ENCODE measurements at regions of chr1 and their contacts with region 1.

Region 1: DNA sequence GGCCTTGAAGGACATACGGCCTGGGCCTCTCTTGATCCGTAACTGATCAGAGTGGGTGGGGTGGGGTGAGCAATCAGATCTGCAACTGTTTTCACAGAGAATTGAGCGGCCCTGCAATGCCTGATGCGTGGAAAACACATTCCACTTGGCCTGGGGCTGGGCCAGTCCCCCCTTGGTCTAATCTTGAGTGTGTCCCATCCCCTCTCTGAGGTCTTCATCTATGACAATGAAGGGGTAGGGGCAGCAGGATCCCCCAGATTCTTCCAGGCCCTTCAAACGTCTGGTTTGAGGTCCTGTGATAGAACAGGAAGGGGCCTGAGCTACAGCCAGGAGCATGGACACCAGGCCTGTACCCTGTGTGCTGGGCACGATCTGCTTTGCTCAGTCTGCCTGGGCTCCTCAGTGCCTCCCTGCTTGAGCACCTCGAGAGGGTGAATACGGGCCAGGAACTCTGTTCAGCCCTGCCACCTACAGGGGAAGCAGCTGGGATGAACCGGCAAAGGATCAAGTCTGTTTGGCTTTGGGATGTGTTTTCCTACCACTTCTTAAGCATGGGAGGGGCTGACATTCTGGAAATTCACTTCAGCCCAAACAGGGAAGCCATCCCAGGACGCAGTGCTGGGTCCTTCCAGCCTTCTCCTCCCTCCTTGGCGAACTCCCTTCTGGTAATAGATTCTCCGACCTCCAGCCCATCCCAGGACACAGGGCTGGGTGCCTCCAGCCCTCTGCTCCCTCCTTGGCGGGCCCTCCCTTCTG is 56.0 kb upstream of the SELENON start:
- DNase-seq: peak; percentile 28
- H3K4me3 ChIP-seq: no peak overlapping the region
- H3K27ac ChIP-seq: no peak overlapping the region
- H3K4me1 ChIP-seq: peaks cover 10% of the 10 kb centered on the region
- H3K27me3 ChIP-seq: no peaks in the 10 kb centered on the region
- CTCF ChIP-seq: peak; percentile 29 to 76

Region 2: DNA sequence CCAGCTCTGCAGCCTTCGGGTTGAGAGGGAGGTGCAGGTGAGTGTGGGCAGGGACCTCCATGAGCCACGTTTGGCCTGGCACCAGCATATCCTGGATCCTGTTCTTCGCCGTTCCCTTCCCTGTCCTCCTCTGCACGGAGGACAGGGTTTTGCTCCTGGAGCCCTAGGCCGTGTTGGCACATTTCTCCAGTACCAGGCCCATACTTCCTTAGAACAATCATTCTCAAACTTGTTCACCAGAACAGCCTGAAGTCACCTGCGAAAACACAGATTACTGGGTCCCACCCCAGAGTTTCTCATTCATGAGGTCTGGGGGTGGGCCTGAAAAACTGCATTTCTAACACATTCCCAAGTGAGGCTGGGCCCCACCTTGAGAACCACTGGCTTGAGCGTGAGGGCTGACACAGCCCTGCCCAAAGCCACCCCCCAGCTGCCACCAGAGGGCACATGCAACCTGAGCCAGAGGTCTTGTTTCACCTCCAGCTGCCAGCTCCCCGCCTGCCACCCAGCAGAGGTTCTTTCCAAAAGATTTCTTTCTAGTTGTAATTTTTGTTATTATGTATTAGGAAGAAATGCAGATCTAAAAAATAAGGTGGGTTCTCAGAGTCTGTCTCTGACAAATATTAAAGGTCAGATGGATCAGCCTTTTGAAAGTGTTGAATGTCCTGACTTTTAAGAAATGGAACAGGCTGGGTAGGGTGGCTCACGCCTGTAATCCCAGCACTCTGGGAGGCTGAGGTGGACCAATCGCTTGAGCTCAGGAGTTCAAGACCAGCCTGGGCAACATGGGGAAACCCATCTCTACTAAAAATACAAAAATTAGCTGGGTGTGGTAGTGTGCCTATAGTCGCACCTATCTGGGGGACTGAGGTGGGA is 240.2 kb before region 1 on chr1:
- CTCF ChIA-PET with region 1: no interaction called
- dilution Hi-C with region 1: no loop called
- in situ Hi-C with region 1: no loop called
- intact Hi-C with region 1: loop called (anchors 2 kb)
- DNase-seq: peak; percentile 21
- H3K4me3 ChIP-seq: no peak overlapping the region
- H3K27ac ChIP-seq: no peak overlapping the region
- H3K4me1 ChIP-seq: no peaks in the 10 kb centered on the region
- H3K27me3 ChIP-seq: no peaks in the 10 kb centered on the region
- CTCF ChIP-seq: peak; percentile 56 to 75

Region 3: GRCh38 chr1:25520446-25521061 is 223.4 kb before region 1 on chr1:
- CTCF ChIA-PET with region 1: no interaction called
- dilution Hi-C with region 1: no loop called
- in situ Hi-C with region 1: no loop called
- intact Hi-C with region 1: loop called (anchors 5 kb)
- DNase-seq: peak; percentile 34
- H3K4me3 ChIP-seq: no peak overlapping the region
- H3K27ac ChIP-seq: no peak overlapping the region
- H3K4me1 ChIP-seq: peaks cover 5% of the 10 kb centered on the region
- H3K27me3 ChIP-seq: no peaks in the 10 kb centered on the region
- CTCF ChIP-seq: peak; percentile 70 to 73

Region 4: DNA sequence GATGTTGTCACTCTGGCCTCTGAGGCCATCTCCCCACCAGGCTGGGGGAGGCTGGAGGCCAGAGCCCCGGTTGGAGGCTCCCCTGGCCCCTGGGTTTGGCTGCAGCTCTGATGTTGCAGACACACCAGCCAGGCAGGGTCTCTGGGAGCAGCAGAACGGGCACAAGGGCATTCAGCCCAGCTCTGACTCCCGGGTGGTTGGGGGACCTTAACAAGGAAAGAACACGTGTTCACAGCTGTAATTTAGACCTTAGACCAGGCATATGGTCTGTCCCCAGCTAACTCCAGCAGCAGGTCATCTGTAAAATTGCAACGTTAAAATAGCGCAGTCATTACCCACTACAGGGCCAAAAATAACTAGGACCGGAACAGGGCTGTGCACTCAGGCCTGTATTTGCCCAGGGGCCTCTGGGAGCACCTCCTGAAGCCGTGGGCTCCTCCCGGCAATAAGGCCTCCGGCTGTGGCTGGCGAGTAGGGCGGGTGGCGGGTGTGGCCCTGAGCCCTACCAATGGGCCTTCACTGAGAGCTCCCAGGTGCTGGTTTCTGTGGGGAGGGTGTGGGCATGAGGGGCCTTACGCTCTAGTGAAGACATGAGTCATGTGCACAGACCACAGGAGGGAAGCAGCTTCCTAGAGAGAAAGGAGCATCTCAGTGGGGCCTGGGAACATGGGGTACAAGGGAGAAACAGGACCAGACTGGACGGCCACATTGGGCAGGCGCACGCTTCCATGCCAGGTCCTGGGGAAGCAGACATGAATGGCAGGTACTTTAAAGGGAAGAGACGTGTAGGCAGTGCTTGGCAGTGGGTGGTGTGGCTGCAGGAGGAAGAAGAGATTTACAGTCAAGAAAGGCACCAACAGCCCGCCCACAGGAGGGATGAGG is 194.5 kb before region 1 on chr1:
- CTCF ChIA-PET with region 1: no interaction called
- dilution Hi-C with region 1: no loop called
- in situ Hi-C with region 1: no loop called
- intact Hi-C with region 1: loop called (anchors 5 kb)
- DNase-seq: peak; percentile 77
- H3K4me3 ChIP-seq: no peak overlapping the region
- H3K27ac ChIP-seq: peak overlapping the region; percentile 25
- H3K4me1 ChIP-seq: peaks cover 27% of the 10 kb centered on the region
- H3K27me3 ChIP-seq: no peaks in the 10 kb centered on the region
- CTCF ChIP-seq: no peak

Region 5: DNA sequence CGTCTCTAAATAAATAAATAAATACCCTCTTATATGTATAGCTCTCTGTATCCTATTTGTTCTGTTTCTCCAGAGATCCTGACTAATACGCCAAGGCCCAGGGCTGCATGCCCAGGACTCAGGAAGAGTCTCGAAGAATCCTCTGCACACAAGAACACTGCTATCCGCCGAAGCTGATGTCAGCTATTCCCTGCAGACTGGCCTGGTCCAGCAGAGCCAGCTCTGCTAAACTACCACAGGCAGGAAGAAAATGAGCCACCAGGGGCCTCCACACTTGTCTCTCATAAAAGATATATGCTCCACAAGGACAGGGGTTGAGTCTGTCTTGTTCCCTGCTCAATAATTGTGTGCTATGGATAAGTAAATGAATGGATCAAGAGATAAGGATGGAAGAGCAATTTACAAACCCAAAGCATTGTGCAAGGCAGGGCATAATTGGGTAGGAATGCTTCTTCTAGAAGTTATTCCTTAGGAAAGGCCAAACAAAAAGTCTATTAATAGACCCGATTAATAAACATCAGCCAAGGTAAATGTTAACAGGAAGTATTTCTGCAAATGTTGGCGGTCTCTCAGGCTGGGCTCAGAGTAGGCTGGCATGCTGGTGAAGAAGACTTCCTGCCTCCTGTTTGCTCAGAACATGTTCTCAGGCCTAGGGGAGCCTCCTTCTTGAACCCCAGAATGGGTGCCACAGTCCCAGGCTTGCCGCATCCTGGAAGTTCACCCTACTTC is 153.7 kb before region 1 on chr1:
- CTCF ChIA-PET with region 1: no interaction called
- dilution Hi-C with region 1: no loop called
- in situ Hi-C with region 1: no loop called
- intact Hi-C with region 1: no loop called
- DNase-seq: no peak
- H3K4me3 ChIP-seq: no peak overlapping the region
- H3K27ac ChIP-seq: no peak overlapping the region
- H3K4me1 ChIP-seq: no peaks in the 10 kb centered on the region
- H3K27me3 ChIP-seq: no peaks in the 10 kb centered on the region
- CTCF ChIP-seq: peak in 1 of 2 donors; percentile 3

Region 6: DNA sequence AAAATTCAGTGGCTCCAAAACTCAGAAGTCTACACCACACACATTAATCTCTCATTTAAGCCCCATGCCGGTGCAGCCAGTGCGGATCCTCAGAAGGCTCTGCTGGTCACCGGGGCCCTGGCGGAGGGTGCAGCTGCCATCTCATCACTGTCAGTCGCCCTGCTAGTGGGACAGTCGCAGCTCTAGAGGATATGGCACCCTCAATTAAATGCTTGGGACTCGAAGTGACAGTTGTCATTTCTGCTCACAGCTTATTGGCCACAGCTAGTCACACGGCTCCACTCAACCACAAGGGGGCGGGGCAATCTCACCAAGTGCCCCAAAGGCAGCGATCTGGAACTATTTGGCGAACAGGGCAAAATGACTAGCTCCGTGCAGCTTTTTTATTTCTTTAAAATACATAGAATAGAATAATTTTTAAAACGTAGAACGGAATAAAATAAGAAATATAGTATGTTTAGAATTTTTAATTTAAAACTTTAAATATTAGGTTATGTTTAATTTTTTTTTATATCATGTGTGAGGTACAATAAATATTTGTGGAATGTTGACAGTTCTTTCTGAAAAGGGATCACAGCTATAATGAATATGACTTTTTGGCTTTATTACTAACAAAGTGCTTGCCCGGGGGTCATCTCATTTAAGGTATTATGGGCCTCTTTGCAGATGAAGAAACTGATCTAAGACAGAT is 135.4 kb before region 1 on chr1:
- CTCF ChIA-PET with region 1: interaction called, 5 read pairs
- dilution Hi-C with region 1: no loop called
- in situ Hi-C with region 1: no loop called
- intact Hi-C with region 1: loop called (anchors 2 kb)
- DNase-seq: peak; percentile 45
- H3K4me3 ChIP-seq: peak overlapping the region in 2 of 3 experiments; percentile 38 to 43
- H3K27ac ChIP-seq: no peak overlapping the region
- H3K4me1 ChIP-seq: peaks cover 3% of the 10 kb centered on the region
- H3K27me3 ChIP-seq: no peaks in the 10 kb centered on the region
- CTCF ChIP-seq: peak; percentile 17 to 65

Region 7: DNA sequence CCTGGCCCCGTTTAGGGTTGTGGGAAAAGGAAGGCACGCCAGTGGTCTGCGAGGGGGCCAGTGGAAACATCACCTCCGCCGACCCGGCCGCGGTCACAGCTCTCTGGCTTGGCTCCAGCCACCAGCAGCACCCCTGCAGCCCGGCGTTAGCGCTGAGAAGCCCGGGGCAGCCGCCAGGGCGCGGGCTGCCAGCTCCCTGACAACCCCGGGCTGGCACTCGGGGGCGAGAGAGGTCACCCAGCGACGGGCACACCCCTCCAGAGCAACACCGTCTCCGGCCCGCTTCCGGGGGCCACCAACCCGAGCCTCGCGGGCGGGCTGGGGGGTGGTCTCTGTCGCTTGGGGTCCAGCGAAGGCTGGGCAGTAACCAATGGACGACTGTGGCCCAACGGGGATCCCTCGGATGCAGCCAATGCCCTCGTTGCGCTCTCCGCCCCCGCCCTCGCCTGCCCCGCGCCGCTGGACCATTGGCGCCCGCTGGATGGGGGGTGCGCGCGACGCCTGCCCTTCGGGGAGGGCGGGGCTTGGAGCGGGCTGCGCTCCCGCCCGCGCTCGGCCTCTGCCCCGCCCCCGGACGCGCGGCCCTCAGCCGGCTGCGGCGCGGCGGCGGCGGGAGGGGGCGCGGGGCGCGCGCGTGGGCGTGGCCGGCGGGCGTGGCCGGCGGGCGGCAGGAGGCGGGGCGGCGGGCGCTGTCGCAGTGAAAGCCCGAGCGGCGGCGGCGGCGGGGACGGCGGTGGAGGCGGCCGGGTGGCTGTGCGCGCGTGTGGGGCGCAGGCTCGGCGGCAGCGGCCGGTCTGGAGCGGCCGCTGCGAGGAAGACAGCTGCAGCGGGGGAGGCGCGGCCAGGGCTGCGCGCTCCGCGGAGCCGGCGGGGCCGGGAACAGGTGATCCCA is 127.7 kb before region 1 on chr1 and contains the start of gene MAN1C1:
- CTCF ChIA-PET with region 1: no interaction called
- dilution Hi-C with region 1: no loop called
- in situ Hi-C with region 1: no loop called
- intact Hi-C with region 1: loop called (anchors 2 kb)
- DNase-seq: peak; percentile 73
- H3K4me3 ChIP-seq: peak within 1 kb of the TSS; percentile 33 to 56 (median 50)
- H3K27ac ChIP-seq: no peak within 1 kb of the TSS
- H3K4me1 ChIP-seq: peaks cover 18% of the 10 kb centered on the region
- H3K27me3 ChIP-seq: peaks cover 27% of the 10 kb centered on the region
- CTCF ChIP-seq: peak in 1 of 2 donors; percentile 36
- total RNA-seq, gene MAN1C1: 0.07 to 0.33 TPM

Region 8: GRCh38 chr1:25796811-25797458 is 52.9 kb after region 1 on chr1:
- CTCF ChIA-PET with region 1: no interaction called
- dilution Hi-C with region 1: no loop called
- in situ Hi-C with region 1: no loop called
- intact Hi-C with region 1: loop called (anchors 2 kb)
- DNase-seq: peak; percentile 59
- H3K4me3 ChIP-seq: no peak overlapping the region
- H3K27ac ChIP-seq: no peak overlapping the region
- H3K4me1 ChIP-seq: peaks cover 15% of the 10 kb centered on the region
- H3K27me3 ChIP-seq: no peaks in the 10 kb centered on the region
- CTCF ChIP-seq: peak; percentile 74 to 89